MCF 10A (cell line): ENCODE measurements at regions of chr6 and their contacts with region 1.

Region 1: GRCh38 chr6:19655744-19656143 is 181.4 kb upstream of the ID4 start:
- DNase-seq: no peak
- H3K4me3 Mint-ChIP-seq: no peak overlapping the region
- H3K27ac Mint-ChIP-seq: no peak overlapping the region
- H3K4me1 Mint-ChIP-seq: no peaks in the 10 kb centered on the region
- H3K27me3 Mint-ChIP-seq: peaks cover 5% of the 10 kb centered on the region
- CTCF ChIP-seq: no peak

Region 2: DNA sequence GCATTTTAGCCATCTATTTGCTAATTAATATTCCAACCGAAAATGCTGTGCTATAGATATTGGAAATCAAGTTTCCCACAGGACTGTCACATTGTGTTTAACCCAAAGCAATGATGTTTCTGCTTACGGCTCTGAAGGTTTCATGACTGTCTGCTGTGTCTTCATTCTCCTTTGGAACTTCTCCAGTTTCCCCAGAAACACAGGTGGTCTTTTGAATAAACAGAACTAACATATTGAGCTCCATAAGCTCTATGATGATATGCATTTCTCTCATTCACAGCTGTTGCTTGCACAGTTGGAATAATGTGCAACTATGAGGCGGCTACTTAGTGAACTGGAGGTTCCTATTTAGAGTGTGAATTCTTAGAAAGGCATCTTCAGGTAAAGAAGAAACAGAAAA is 84.6 kb before region 1 on chr6:
- CTCF ChIA-PET with region 1: no interaction called
- POLR2A ChIA-PET with region 1: no interaction called
- intact Hi-C with region 1: loop called (anchors 1 kb)
- DNase-seq: no peak
- H3K4me3 Mint-ChIP-seq: no peak overlapping the region
- H3K27ac Mint-ChIP-seq: no peak overlapping the region
- H3K4me1 Mint-ChIP-seq: no peaks in the 10 kb centered on the region
- H3K27me3 Mint-ChIP-seq: no peaks in the 10 kb centered on the region
- CTCF ChIP-seq: no peak

Region 3: DNA sequence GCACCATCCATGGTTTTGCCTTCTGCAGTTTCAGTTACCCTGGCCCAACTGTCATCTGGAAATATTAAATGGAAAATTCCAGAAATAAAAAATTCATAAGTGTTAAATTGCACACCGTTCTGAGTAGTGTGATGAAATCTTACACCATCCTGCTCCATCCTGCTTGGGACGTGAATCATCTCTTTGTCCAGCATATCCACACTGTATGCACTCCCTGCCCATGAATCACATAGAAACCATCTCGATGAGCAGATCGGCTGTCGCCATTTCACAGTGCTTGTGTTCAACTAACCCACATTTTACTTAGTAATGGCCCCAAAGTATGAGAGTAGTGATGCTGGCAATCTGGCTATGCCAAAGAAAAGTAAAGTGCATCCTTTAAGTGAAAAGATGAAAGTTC is 75.5 kb after region 1 on chr6:
- CTCF ChIA-PET with region 1: no interaction called
- POLR2A ChIA-PET with region 1: no interaction called
- intact Hi-C with region 1: no loop called
- DNase-seq: peak; percentile 94
- H3K4me3 Mint-ChIP-seq: no peak overlapping the region
- H3K27ac Mint-ChIP-seq: peak overlapping the region; percentile 21
- H3K4me1 Mint-ChIP-seq: peaks cover 13% of the 10 kb centered on the region
- H3K27me3 Mint-ChIP-seq: no peaks in the 10 kb centered on the region
- CTCF ChIP-seq: no peak